ENCODE measurements at regions of chr5 and their contacts with region 1.

Region 1: DNA sequence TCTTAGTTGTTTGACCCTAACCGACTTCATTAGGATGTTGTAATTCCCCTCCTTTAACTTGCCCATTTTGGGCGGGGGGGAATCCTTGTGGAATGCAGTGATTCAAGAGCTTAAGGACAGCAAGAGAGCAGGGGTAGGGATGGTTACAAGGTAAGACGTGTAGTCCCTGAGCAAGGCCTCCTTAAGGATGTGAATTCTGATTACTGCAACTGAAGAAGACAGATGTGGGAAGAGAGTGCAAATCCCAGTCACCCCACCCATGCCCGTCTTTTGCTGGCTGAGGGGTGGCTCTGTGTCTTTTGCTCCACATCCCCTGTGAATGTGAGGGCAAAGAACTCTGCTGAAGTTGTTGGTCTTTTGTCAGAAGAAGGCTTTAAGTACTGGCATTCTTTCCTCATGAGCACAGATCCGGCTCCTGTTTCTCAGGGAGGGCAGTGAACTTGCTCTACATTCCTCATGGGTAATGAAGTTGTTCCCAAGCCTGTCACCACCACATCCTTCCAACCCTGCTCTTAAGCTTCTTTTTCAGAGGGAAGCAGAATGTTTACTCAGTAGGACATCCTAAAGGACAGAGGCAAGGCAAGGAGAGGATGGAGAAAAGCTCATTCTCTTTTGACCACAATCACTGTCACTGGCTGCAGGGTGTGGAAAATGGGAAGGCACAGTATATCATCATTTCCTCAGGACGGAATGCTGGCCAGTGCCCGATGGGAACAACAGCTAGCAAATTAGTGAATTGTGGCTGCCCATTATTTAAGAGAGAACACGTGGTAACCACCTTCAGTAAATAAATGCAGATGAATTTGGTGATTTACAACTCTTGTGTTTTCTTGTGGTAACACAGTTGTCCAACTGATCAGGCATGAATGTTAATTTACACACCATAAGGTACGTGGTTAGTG is 61.5 kb downstream of the RAI14 start:
- DNase-seq: no peak
- ATAC-seq: no peak
- H3K4me3 ChIP-seq: no peak overlapping the region
- H3K27ac ChIP-seq: no peak overlapping the region
- H3K4me1 ChIP-seq: no peaks in the 10 kb centered on the region
- H3K27me3 ChIP-seq: no peaks in the 10 kb centered on the region; a peak in 2 of 4 replicates
- CTCF ChIP-seq: no peak
- EP300 ChIP-seq: no peak
- POLR2A ChIP-seq: no peak
- RAD21 ChIP-seq: no peak

Region 2: GRCh38 chr5:34756781-34757624 is 39.3 kb after region 1 on chr5:
- CTCF ChIA-PET with region 1: no interaction called
- POLR2A ChIA-PET with region 1: interaction called, 10 read pairs
- RAD21 ChIA-PET with region 1: no interaction called
- SMC1A ChIA-PET with region 1: no interaction called
- in situ Hi-C with region 1: no loop called
- intact Hi-C with region 1: no loop called
- DNase-seq: no peak
- ATAC-seq: no peak
- H3K4me3 ChIP-seq: no peak overlapping the region
- H3K27ac ChIP-seq: no peak overlapping the region
- H3K4me1 ChIP-seq: no peaks in the 10 kb centered on the region
- H3K27me3 ChIP-seq: no peaks in the 10 kb centered on the region
- CTCF ChIP-seq: no peak
- EP300 ChIP-seq: no peak
- POLR2A ChIP-seq: no peak
- RAD21 ChIP-seq: no peak

Measured in GM12878 (cell line).